WTC11 (cell line): ENCODE measurements at regions of chr2 and their contacts with region 1.

Region 1: DNA sequence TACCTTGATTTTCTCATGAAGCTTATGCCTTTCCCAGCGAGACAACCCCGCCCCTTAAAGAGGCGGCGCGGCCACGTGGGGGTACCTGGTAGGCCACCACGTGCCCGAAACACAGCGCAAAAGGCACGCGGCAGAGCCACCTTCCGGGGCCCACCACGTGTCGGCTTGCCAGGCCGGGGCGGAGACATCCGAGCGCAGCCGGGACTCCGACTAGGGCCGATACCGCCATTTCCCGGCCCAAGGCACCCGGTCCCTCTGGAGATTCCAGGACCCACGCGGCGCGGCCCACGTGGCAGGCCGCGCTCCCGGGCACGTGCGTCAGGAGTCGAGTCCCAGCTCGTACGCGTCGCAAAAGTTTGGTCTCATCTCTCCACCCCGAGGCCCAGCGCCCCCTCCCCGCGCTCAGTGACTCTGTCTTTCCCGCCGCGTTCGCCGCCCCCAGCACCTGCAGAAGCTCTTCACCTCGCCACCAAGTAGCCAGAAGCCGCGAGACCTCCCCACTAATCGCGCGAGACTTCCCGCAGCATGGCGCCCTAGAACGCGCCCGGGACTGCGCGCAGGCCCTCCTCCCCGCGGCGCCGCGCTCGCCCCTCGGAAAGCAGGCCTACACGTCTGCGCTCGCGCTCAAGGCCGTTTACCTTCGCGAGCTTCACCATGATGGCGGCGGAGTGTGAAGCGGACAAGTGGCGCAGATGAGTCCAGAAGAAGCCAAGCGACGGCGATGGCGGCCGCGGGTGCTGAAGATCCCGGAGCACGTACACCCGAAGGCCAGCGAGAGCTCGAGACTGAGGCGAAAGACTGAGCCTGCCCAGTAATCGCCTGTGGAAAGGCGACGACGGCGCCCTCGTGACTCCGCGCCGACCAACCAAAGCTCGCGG is at the start of gene NCL:
- DNase-seq: peak; percentile 84
- ATAC-seq: peak; percentile 94
- H3K4me3 Mint-ChIP-seq: peak within 1 kb of the TSS; percentile 98
- H3K27ac Mint-ChIP-seq: peak within 1 kb of the TSS; percentile 99
- H3K4me1 Mint-ChIP-seq: peaks cover 36% of the 10 kb centered on the region
- H3K27me3 Mint-ChIP-seq: 0 out of 2 replicates have a peak, but pooled peaks cover 3% of the 10 kb centered on the region
- CTCF ChIP-seq: no peak
- total RNA-seq, gene NCL: 944 to 1,223 TPM (median 1,004 TPM) in 3 replicates

Region 2: DNA sequence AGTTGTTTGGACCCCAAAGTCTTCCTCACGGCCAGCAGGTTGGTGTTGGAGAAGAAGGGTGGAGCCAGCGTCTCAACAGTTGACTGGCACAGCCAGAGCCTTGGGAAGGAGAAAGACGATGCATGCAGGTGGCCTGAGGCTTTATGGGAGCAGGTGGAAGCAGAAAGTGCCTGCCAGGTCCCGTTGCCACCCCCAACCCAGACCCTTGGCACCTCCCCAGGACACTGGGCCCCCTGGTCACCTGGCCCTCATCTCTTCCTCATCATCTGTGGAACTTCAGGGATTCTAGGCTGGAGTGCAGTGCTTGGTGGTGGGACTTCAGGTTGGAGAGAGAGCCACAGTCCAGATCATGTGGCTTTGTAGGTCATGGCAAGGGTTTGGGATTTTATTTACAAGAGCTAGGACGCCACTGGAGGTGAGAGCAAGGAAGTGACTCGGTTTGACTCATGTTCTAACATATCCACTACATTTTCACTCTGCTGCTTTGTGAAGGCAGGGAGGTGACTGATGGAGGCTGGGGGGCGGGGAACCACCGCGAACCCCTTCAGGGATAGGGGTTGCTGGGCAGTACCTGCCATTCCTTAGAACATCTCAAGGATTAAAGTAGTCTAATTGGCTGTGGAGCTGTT is 131.0 kb before region 1 on chr2:
- CTCF ChIA-PET with region 1: no interaction called
- POLR2A ChIA-PET with region 1: no interaction called
- DNase-seq: no peak
- ATAC-seq: no peak
- H3K4me3 Mint-ChIP-seq: no peak overlapping the region
- H3K27ac Mint-ChIP-seq: peak overlapping the region; percentile 32
- H3K4me1 Mint-ChIP-seq: peaks cover 18% of the 10 kb centered on the region
- H3K27me3 Mint-ChIP-seq: no peaks in the 10 kb centered on the region
- CTCF ChIP-seq: no peak

Region 3: DNA sequence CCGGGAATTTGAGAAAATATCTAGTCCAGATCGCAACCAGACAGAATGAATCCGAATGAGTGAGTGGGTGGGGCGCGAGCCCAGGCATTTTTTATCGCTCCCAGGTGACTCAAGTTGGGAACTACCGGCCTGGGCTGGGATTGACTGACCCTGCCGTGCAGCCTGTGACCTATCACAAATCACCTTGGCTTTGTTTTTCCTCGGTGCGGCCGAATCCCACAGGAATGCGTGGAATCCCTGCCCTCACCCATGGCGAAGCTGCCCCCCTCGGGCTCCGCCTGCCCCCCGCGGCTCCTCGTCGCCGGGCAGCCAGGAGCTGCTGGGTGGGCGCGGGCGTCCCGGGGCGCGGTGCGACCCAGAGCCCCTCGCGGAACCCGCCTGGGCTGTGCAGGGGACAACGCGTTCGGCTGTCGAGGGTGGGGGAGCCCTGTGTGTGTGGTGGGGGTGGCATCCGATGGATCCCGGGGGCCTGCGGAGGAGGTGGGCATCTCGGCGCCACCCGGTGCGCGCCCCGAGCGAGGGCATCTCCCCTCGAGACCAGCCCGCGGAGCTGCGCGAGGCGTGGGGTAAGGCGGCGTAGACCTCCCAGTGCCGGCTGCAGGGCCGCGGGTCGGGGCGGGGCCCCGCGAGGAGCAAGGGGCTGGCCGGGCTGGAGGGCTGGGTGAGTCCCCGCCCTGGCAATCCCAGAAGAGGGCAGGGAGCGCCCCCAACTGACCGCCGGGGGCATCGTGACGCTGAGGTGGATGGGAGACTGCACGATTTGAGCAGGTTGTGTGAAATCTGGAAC is 51.9 kb before region 1 on chr2:
- CTCF ChIA-PET with region 1: interaction called, 4 read pairs
- POLR2A ChIA-PET with region 1: interaction called, 15 read pairs
- DNase-seq: peak; percentile 95
- ATAC-seq: peak; percentile 85
- H3K4me3 Mint-ChIP-seq: peak overlapping the region; percentile 69
- H3K27ac Mint-ChIP-seq: peak overlapping the region; percentile 99
- H3K4me1 Mint-ChIP-seq: peaks cover 60% of the 10 kb centered on the region
- H3K27me3 Mint-ChIP-seq: no peaks in the 10 kb centered on the region
- CTCF ChIP-seq: peak; percentile 76

Region 4: DNA sequence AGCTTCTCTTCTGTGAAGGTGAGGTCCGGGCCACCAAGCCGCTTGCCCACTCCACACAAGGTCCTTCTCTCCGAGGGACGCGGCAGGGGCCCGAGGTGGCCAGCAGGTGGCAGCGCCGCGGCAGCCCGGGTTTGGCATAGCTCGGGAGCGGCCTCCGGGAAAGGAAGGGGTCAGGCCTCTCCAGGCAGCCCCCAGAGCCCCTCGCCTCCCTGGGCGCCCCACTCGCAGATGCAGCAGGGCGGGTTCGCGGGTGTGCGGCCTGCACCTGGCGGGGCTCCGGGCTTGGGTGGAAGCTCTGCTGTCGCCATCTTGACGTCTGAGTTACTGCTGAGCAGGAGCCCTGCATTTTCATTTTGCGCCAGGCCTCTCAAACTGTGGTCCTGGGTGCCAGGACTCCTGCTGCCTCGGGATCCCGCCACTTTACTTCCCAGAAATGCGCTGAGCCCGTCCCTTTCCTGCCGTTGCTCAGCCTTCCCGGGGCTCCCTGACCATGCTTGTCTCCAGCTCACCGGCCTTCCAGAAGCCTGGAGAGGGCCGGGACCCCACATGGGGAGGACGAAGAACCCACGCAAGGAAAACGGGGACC is 19.0 kb after region 1 on chr2:
- CTCF ChIA-PET with region 1: interaction called, 74 read pairs
- POLR2A ChIA-PET with region 1: interaction called, 23 read pairs
- DNase-seq: peak; percentile 82
- ATAC-seq: peak; percentile 84
- H3K4me3 Mint-ChIP-seq: no peak overlapping the region
- H3K27ac Mint-ChIP-seq: no peak overlapping the region
- H3K4me1 Mint-ChIP-seq: peaks cover 7% of the 10 kb centered on the region
- H3K27me3 Mint-ChIP-seq: no peaks in the 10 kb centered on the region; the same call in 1 of the 2 replicates
- CTCF ChIP-seq: peak; percentile 55

Region 5: DNA sequence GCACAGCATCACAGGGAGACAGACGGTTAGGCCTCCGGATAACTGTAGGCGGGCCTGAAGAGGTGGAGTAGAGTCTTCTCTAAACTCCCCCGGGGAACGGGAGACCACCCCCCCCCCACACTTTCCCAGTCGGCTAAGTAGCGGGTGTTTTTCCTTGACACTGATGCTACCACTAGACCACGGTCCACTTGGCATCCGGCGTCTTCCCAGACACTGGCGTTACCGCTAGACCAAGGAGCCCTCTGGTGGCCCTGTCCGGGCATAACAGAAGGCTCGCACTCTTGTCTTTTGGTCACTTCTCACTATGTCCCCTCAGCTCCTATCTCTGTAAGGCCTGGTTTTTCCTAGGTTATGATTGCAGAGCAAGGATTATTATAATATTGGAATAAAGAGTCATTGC is 26.1 kb after region 1 on chr2:
- CTCF ChIA-PET with region 1: interaction called, 11 read pairs
- POLR2A ChIA-PET with region 1: interaction called, 5 read pairs
- DNase-seq: peak; percentile 80
- ATAC-seq: no peak
- H3K4me3 Mint-ChIP-seq: no peak overlapping the region
- H3K27ac Mint-ChIP-seq: no peak overlapping the region
- H3K4me1 Mint-ChIP-seq: no peaks in the 10 kb centered on the region
- H3K27me3 Mint-ChIP-seq: no peaks in the 10 kb centered on the region; the same call in 1 of the 2 replicates
- CTCF ChIP-seq: peak; percentile 51; the same call in 1 of the 2 replicates

Region 6: GRCh38 chr2:231514103-231514950 is 50.4 kb after region 1 on chr2:
- CTCF ChIA-PET with region 1: interaction called, 5 read pairs
- POLR2A ChIA-PET with region 1: interaction called, 13 read pairs
- DNase-seq: peak; percentile 97
- ATAC-seq: peak; percentile 98
- H3K4me3 Mint-ChIP-seq: peak overlapping the region; percentile 90
- H3K27ac Mint-ChIP-seq: peak overlapping the region; percentile 99
- H3K4me1 Mint-ChIP-seq: peaks cover 22% of the 10 kb centered on the region
- H3K27me3 Mint-ChIP-seq: peaks cover 11% of the 10 kb centered on the region
- CTCF ChIP-seq: no peak

Region 7: DNA sequence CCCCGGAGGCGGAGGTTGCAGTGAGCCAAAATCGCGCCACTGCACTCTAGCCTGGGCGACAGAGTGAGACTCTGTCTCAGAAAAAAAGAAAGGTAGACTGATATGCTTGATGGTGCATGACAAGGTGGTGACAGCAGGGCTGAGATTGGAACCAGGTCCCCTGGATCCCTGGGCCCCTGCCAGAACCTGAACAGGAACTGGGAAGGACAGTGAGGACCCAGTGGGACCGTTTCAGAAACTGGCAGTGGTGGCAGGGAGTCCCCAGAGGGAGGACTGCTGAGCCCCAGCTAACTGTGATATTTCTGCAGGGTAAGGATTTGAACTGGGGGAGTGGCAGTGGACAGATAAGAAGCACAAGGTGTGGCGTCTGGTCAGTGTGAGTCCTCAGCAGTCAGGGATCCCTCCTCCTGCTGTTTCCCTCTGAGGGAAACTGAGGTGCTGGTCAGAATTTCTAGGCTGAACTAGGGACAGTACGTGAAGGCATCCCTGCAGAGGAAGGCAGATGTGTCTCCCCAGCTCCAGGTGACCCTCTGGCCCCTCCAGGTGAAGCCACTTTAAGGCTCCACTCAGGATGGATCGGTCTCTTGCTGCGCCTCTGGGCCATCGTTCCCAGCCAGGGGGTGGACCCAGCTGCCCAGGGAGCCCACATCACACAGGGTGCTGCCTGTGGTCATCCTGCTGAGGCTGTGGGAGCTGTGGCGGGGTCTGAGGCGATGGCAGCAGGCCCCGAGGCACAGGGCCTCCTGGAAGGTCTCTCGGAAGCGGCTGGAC is 60.7 kb after region 1 on chr2:
- CTCF ChIA-PET with region 1: no interaction called
- POLR2A ChIA-PET with region 1: no interaction called
- DNase-seq: no peak
- ATAC-seq: no peak
- H3K4me3 Mint-ChIP-seq: no peak overlapping the region
- H3K27ac Mint-ChIP-seq: no peak overlapping the region
- H3K4me1 Mint-ChIP-seq: peaks cover 8% of the 10 kb centered on the region
- H3K27me3 Mint-ChIP-seq: peaks cover 21% of the 10 kb centered on the region
- CTCF ChIP-seq: no peak

Region 8: DNA sequence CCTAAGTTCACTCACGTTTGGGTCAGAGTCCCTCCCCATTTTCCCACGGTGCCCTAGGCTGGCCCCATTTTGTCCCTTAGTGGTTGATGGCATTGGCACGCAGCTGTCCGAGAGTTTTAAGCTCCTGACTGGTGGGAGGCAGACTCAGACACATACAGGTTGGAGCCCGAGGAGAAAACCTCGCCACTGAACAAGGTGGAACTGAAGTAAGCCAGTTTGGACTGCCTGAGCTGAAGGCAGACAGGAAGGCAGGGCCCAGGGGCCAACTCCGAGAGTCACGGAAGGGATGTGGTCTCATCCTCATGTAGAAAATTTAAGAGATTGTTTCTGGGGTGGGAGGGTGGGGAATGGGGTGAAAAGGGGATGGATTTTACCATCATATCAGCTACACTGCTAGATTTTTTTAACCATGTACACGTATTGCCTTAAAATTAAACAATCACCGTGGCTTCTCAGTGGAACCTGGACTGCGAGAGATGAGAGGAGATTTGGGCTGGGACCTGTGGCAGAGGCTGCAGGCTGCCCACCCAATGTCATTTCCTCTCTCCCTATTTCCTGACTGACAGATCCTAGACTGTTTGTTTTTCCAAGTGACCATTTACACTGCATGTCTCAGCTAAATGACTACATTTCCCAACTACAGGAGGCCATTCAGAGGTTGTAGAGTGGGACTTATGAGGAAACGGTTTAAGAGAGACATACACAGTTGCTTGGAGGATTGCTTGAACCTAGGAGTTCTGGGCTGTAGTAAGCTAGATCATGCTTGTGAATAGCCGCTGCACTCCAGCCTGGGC is 85.7 kb after region 1 on chr2:
- CTCF ChIA-PET with region 1: no interaction called
- POLR2A ChIA-PET with region 1: no interaction called
- DNase-seq: no peak
- ATAC-seq: no peak
- H3K4me3 Mint-ChIP-seq: no peak overlapping the region
- H3K27ac Mint-ChIP-seq: no peak overlapping the region
- H3K4me1 Mint-ChIP-seq: no peaks in the 10 kb centered on the region
- H3K27me3 Mint-ChIP-seq: peaks cover 3% of the 10 kb centered on the region; the same call in 1 of the 2 replicates
- CTCF ChIP-seq: no peak